K562 (cell line): ENCODE measurements at regions of chr6 and their contacts with region 1.

Region 1: GRCh38 chr6:17741507-17741906 is 34.8 kb upstream of the NUP153 start:
- DNase-seq: no peak
- ATAC-seq: peak; percentile 71
- H3K4me3 ChIP-seq: no peak overlapping the region
- H3K27ac ChIP-seq: no peak overlapping the region
- H3K4me1 ChIP-seq: peaks cover 2 to 4% of the 10 kb centered on the region in 2 experiments; a peak in 4 of 5 replicates
- H3K27me3 ChIP-seq: no peaks in the 10 kb centered on the region
- CTCF ChIP-seq: no peak
- EP300 ChIP-seq: no peak
- POLR2A ChIP-seq: no peak
- RAD21 ChIP-seq: no peak

Region 2: GRCh38 chr6:17729324-17730077 is 12.0 kb before region 1 on chr6:
- CTCF ChIA-PET with region 1: no interaction called
- POLR2A ChIA-PET with region 1: interaction called, 15 read pairs
- in situ Hi-C with region 1: no loop called
- intact Hi-C with region 1: no loop called
- DNase-seq: peak in 1 of 4 experiments; percentile 44
- ATAC-seq: peak; percentile 66
- H3K4me3 ChIP-seq: no peak overlapping the region
- H3K27ac ChIP-seq: peak overlapping the region; percentile 69
- H3K4me1 ChIP-seq: peaks cover 4 to 16% of the 10 kb centered on the region in 2 experiments
- H3K27me3 ChIP-seq: no peaks in the 10 kb centered on the region
- CTCF ChIP-seq: no peak
- EP300 ChIP-seq: peak; percentile 60; the same call in 1 of the 2 replicates
- POLR2A ChIP-seq: no peak; the same call in 1 of the 2 replicates
- RAD21 ChIP-seq: no peak

Region 3: GRCh38 chr6:17758119-17758518 is 16.6 kb after region 1 on chr6:
- CTCF ChIA-PET with region 1: no interaction called
- POLR2A ChIA-PET with region 1: interaction called, 13 read pairs
- in situ Hi-C with region 1: no loop called
- intact Hi-C with region 1: no loop called
- DNase-seq: no peak
- ATAC-seq: no peak
- H3K4me3 ChIP-seq: no peak overlapping the region
- H3K27ac ChIP-seq: no peak overlapping the region
- H3K4me1 ChIP-seq: no peaks in the 10 kb centered on the region; a peak in 1 of 5 replicates
- H3K27me3 ChIP-seq: no peaks in the 10 kb centered on the region
- CTCF ChIP-seq: no peak
- EP300 ChIP-seq: no peak
- POLR2A ChIP-seq: no peak
- RAD21 ChIP-seq: no peak

Region 4: GRCh38 chr6:17845598-17845997 is 104.1 kb after region 1 on chr6:
- CTCF ChIA-PET with region 1: no interaction called
- POLR2A ChIA-PET with region 1: no interaction called
- in situ Hi-C with region 1: no loop called
- intact Hi-C with region 1: no loop called
- DNase-seq: peak in 1 of 4 experiments; percentile 49
- ATAC-seq: peak; percentile 18; the same call in 2 of the 3 replicates
- H3K4me3 ChIP-seq: no peak overlapping the region
- H3K27ac ChIP-seq: peak overlapping the region; percentile 4
- H3K4me1 ChIP-seq: peaks cover 14 to 47% of the 10 kb centered on the region in 2 experiments
- H3K27me3 ChIP-seq: no peaks in the 10 kb centered on the region
- CTCF ChIP-seq: peak in 1 of 3 experiments; percentile 26; a peak in 1 of 6 replicates
- EP300 ChIP-seq: no peak
- POLR2A ChIP-seq: no peak
- RAD21 ChIP-seq: peak; percentile 40 to 58